ENCODE measurements at regions of chr15 and their contacts with region 1.

Region 1: DNA sequence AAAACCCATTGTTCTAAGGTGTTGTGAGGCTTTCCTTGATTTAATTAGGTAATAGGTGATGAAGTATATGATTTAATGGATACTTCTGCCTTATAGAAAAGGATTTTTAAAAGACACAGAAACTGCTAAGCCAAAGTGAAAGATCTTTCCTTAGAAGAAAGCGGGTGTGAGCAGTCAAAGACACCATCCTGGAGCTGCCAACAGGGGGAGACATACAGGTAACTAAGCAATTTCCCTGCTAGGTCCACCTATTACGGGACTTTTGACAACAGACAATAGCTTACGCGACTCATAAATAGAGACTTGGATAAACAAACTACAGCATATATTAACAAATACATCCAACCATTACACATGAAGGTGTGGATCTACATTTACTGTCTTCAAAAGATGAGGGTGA is 669.5 kb downstream of the SQOR start:
- DNase-seq: peak; percentile 4
- ATAC-seq: 0 out of 3 replicates have a peak, but pooled peaks have one; percentile 40
- H3K4me3 ChIP-seq: no peak overlapping the region
- H3K27ac ChIP-seq: no peak overlapping the region
- H3K4me1 ChIP-seq: no peaks in the 10 kb centered on the region
- H3K27me3 ChIP-seq: no peaks in the 10 kb centered on the region; a peak in 1 of 5 replicates
- CTCF ChIP-seq: peak; percentile 45
- EP300 ChIP-seq: no peak
- POLR2A ChIP-seq: no peak
- RAD21 ChIP-seq: no peak

Region 2: DNA sequence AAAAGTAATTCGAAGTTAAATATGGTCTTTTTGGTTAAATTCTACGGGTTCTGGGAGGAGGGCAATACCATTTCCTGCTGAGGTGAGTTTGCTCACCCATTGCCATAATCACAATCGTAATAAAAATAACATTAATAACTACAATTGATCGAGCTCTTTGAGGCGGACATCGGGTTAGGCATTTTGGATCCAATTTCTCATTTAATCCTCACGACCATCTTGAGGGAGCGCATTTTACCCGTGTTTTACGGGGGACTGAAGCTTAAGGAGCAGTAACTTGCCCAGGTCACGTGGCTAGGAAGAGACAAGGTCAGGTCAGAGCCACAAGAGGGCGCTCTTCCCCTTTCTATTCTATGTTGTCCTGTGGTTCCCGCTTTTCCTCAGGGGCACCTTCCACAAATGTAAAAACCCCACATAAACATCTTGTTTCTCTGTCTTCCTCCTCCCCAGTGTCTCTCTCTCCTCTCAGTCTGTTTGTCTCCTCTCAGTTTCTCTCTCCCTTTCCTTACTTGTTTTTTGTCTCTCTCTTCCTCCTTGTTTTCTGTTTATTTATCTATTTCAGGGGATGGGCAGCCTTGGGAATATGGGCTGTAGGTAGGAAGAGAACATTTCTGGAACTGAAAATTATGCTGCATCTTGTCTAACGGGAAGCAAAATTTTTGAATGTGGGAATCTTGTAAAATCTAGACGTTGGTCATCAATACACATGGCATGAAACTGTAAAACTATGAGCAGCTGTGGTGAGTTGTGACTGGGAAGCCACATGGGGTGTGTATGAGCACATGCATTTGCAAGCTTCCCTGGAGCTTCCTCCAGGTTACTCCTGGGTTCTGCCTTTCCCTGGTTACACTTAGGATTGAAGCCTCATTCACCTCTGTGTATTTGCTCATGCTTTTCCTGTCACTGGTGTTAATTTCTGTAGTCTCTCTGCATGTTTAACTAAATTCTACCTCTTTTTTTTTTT is 598.5 kb before region 1 on chr15:
- CTCF ChIA-PET with region 1: no interaction called
- POLR2A ChIA-PET with region 1: no interaction called
- in situ Hi-C with region 1: no loop called
- intact Hi-C with region 1: loop called (anchors 5 kb)
- DNase-seq: peak; percentile 68
- ATAC-seq: peak; percentile 90
- H3K4me3 ChIP-seq: peak overlapping the region; percentile 57 to 70 (median 68)
- H3K27ac ChIP-seq: no peak overlapping the region
- H3K4me1 ChIP-seq: peaks cover 6% of the 10 kb centered on the region; the same call in 1 of the 2 replicates
- H3K27me3 ChIP-seq: no peaks in the 10 kb centered on the region
- CTCF ChIP-seq: peak; percentile 90
- EP300 ChIP-seq: no peak
- POLR2A ChIP-seq: no peak
- RAD21 ChIP-seq: peak; percentile 77

Region 3: GRCh38 chr15:46126581-46126980 is 177.7 kb before region 1 on chr15:
- CTCF ChIA-PET with region 1: no interaction called
- POLR2A ChIA-PET with region 1: no interaction called
- in situ Hi-C with region 1: no loop called
- intact Hi-C with region 1: no loop called
- DNase-seq: no peak
- ATAC-seq: no peak
- H3K4me3 ChIP-seq: no peak overlapping the region
- H3K27ac ChIP-seq: no peak overlapping the region
- H3K4me1 ChIP-seq: no peaks in the 10 kb centered on the region
- H3K27me3 ChIP-seq: no peaks in the 10 kb centered on the region
- CTCF ChIP-seq: no peak
- EP300 ChIP-seq: no peak
- POLR2A ChIP-seq: no peak
- RAD21 ChIP-seq: no peak

Region 4: DNA sequence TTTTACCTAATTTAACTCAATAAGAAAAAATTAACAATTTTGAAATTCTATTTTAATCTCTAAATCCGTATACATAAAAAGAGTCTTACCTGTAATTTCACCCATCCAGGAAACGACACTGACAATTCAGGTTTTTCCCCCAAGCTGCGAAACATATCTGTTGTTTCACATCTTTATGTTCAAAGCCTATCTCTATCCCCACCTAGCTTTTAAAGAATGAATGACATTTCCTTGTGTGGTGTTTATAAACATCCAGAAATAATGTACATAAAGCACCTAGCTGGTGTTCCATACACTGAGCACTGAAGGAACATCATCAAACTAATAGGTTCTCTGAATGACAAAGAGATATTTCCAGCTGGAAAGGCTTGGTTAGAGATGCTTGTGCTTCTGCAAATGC is 198.3 kb after region 1 on chr15:
- CTCF ChIA-PET with region 1: no interaction called
- POLR2A ChIA-PET with region 1: no interaction called
- in situ Hi-C with region 1: no loop called
- intact Hi-C with region 1: loop called (anchors 2 kb)
- DNase-seq: peak; percentile 1
- ATAC-seq: no peak
- H3K4me3 ChIP-seq: no peak overlapping the region
- H3K27ac ChIP-seq: no peak overlapping the region
- H3K4me1 ChIP-seq: no peaks in the 10 kb centered on the region
- H3K27me3 ChIP-seq: no peaks in the 10 kb centered on the region
- CTCF ChIP-seq: peak; percentile 22
- EP300 ChIP-seq: no peak
- POLR2A ChIP-seq: no peak
- RAD21 ChIP-seq: no peak

Region 5: DNA sequence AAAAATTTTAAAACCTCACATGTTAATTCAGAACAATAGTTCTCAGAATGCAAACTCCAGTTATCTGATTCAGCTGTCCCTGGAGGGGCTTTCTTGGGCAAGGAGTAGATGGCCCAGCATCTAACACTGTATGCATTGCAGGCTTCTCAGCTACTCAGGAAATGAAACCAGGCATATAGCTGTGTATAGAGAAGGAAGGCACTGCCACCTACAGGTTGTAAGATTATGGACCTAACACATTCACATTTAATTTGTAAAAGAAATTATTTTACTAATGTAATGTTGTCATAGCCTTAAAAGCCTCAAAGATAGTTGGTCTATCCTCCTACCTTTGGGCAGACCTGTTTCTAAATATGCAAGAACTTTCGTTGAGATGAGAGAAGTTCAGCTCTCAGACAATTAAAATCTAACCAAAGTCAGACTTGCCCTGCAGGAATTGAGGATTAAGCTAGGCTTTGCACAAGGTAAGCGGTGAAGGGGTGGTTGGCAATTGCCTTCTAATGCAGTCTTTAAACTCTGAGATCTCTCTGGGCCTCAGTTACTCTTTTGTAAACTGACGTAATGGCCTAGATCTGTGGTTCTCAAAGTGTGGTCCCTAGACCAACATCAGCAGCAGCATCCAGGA is 1683.7 kb after region 1 on chr15:
- CTCF ChIA-PET with region 1: no interaction called
- POLR2A ChIA-PET with region 1: no interaction called
- in situ Hi-C with region 1: no loop called
- intact Hi-C with region 1: loop called (anchors 10 kb)
- DNase-seq: peak; percentile 35
- ATAC-seq: peak; percentile 90
- H3K4me3 ChIP-seq: no peak overlapping the region
- H3K27ac ChIP-seq: no peak overlapping the region
- H3K4me1 ChIP-seq: no peaks in the 10 kb centered on the region
- H3K27me3 ChIP-seq: no peaks in the 10 kb centered on the region
- CTCF ChIP-seq: peak; percentile 60
- EP300 ChIP-seq: no peak
- POLR2A ChIP-seq: no peak
- RAD21 ChIP-seq: no peak; the same call in 1 of the 2 replicates

Region 6: GRCh38 chr15:48250640-48251076 is 1946.3 kb after region 1 on chr15:
- CTCF ChIA-PET with region 1: no interaction called
- POLR2A ChIA-PET with region 1: no interaction called
- in situ Hi-C with region 1: no loop called
- intact Hi-C with region 1: loop called (anchors 10 kb)
- DNase-seq: peak; percentile 25
- ATAC-seq: peak; percentile 40; the same call in 1 of the 3 replicates
- H3K4me3 ChIP-seq: no peak overlapping the region
- H3K27ac ChIP-seq: no peak overlapping the region
- H3K4me1 ChIP-seq: no peaks in the 10 kb centered on the region
- H3K27me3 ChIP-seq: 0 out of 5 replicates have a peak, but pooled peaks cover 0 to 1% of the 10 kb centered on the region in 2 experiments
- CTCF ChIP-seq: peak; percentile 51
- EP300 ChIP-seq: no peak
- POLR2A ChIP-seq: no peak
- RAD21 ChIP-seq: no peak